MCF 10A (cell line): ENCODE measurements at regions of chr22 and their contacts with region 1.

Region 1: GRCh38 chr22:38467904-38468758 is at the start of gene KDELR3:
- DNase-seq: peak; percentile 72
- H3K4me3 Mint-ChIP-seq: peak within 1 kb of the TSS; percentile 70
- H3K27ac Mint-ChIP-seq: peak within 1 kb of the TSS; percentile 31
- H3K4me1 Mint-ChIP-seq: no peaks in the 10 kb centered on the region
- H3K27me3 Mint-ChIP-seq: no peaks in the 10 kb centered on the region
- CTCF ChIP-seq: no peak
- total RNA-seq, gene KDELR3: 6.4 and 11.5 TPM in 2 replicates

Region 2: GRCh38 chr22:38481162-38481870 is 13.2 kb after region 1 on chr22:
- CTCF ChIA-PET with region 1: no interaction called
- POLR2A ChIA-PET with region 1: interaction called, 10 read pairs
- intact Hi-C with region 1: no loop called
- DNase-seq: no peak
- H3K4me3 Mint-ChIP-seq: no peak overlapping the region
- H3K27ac Mint-ChIP-seq: no peak overlapping the region
- H3K4me1 Mint-ChIP-seq: no peaks in the 10 kb centered on the region
- H3K27me3 Mint-ChIP-seq: no peaks in the 10 kb centered on the region
- CTCF ChIP-seq: no peak